ENCODE measurements at regions of chr6 and their contacts with region 1.

Region 1: GRCh38 chr6:33271458-33272274 is at the starts of genes RPS18 and VPS52:
- DNase-seq: peak; percentile 94
- H3K4me3 Mint-ChIP-seq: peak within 1 kb of the TSS; percentile 94
- H3K27ac Mint-ChIP-seq: peak within 1 kb of the TSS; percentile 98
- H3K4me1 Mint-ChIP-seq: peaks cover 42% of the 10 kb centered on the region
- H3K27me3 Mint-ChIP-seq: no peaks in the 10 kb centered on the region
- total RNA-seq, gene RPS18: 4,372 to 4,391 TPM
- total RNA-seq, gene VPS52: 32.7 to 33.7 TPM

Region 2: GRCh38 chr6:32843979-32844838 is 427.5 kb before region 1 on chr6 and contains the start of gene PSMB8:
- CTCF ChIA-PET with region 1: interaction called, 4 read pairs
- POLR2A ChIA-PET with region 1: no interaction called
- intact Hi-C with region 1: loop called (anchors 2 kb)
- DNase-seq: peak; percentile 99
- H3K4me3 Mint-ChIP-seq: peak within 1 kb of the TSS; percentile 97
- H3K27ac Mint-ChIP-seq: peak within 1 kb of the TSS; percentile 100
- H3K4me1 Mint-ChIP-seq: peaks cover 63% of the 10 kb centered on the region
- H3K27me3 Mint-ChIP-seq: no peaks in the 10 kb centered on the region
- total RNA-seq, gene PSMB8: 350 to 370 TPM

Region 3: GRCh38 chr6:33288921-33289748 is 17.5 kb after region 1 on chr6 and contains the starts of genes PFDN6 and WDR46:
- CTCF ChIA-PET with region 1: interaction called, 37 read pairs
- POLR2A ChIA-PET with region 1: interaction called, 40 read pairs
- intact Hi-C with region 1: loop called (anchors 1 kb)
- DNase-seq: peak; percentile 89
- H3K4me3 Mint-ChIP-seq: peak within 1 kb of the TSS; percentile 98
- H3K27ac Mint-ChIP-seq: peak within 1 kb of the TSS; percentile 80
- H3K4me1 Mint-ChIP-seq: peaks cover 41% of the 10 kb centered on the region
- H3K27me3 Mint-ChIP-seq: no peaks in the 10 kb centered on the region
- total RNA-seq, gene PFDN6: 78.5 to 90.9 TPM
- total RNA-seq, gene WDR46: 59.4 to 60.7 TPM

Region 4: DNA sequence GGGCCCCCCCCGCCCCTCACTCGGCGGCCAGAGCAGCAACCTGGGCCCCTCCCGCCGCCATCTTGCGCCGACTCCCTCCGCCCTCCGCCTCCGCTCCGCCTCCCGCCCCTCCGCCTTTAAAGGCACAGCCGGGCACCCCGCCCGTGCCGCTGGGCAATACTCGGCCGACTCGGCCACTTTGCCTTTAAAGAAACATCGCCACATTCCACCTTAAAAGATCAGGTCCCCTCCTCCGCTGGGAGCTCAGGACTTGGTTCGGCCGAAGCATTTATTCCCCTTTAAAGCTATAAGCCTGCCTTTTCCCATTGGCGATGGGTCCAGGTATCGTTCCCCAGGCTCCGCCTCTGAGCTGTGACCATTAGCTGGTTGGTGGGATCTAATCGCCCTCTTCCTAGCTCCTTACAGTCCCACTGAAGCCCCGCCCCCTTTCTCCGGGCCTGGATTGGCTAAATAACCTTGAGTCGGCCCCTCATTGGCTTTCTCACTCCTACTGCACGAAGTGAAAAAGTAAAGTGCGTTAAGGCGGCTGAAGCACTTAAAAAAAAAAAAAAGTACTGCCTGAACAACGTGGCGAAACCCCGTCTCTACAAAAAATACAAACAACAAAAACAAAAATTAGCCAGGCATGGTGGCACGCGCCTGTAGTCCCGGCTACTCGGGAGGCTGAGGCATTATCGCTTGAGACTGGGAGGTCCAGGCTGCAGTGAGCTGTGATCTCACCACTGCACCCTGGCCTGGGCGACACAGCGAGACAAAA is 46.2 kb after region 1 on chr6 and contains the start of gene ZBTB22:
- CTCF ChIA-PET with region 1: interaction called, 8 read pairs
- POLR2A ChIA-PET with region 1: interaction called, 14 read pairs
- intact Hi-C with region 1: loop called (anchors 1 kb)
- DNase-seq: peak; percentile 97
- H3K4me3 Mint-ChIP-seq: peak within 1 kb of the TSS; percentile 94
- H3K27ac Mint-ChIP-seq: peak within 1 kb of the TSS; percentile 95
- H3K4me1 Mint-ChIP-seq: peaks cover 71% of the 10 kb centered on the region
- H3K27me3 Mint-ChIP-seq: no peaks in the 10 kb centered on the region
- total RNA-seq, gene ZBTB22: 11.0 to 12.1 TPM

Region 5: GRCh38 chr6:33344701-33345697 is 73.3 kb after region 1 on chr6:
- CTCF ChIA-PET with region 1: interaction called, 17 read pairs
- POLR2A ChIA-PET with region 1: interaction called, 4 read pairs
- intact Hi-C with region 1: loop called (anchors 1 kb)
- DNase-seq: peak; percentile 75
- H3K4me3 Mint-ChIP-seq: peak overlapping the region; percentile 73
- H3K27ac Mint-ChIP-seq: peak overlapping the region; percentile 85
- H3K4me1 Mint-ChIP-seq: peaks cover 24% of the 10 kb centered on the region
- H3K27me3 Mint-ChIP-seq: no peaks in the 10 kb centered on the region

Region 6: GRCh38 chr6:33481189-33481588 is 209.5 kb after region 1 on chr6:
- CTCF ChIA-PET with region 1: no interaction called
- POLR2A ChIA-PET with region 1: no interaction called
- intact Hi-C with region 1: no loop called
- DNase-seq: no peak
- H3K4me3 Mint-ChIP-seq: no peak overlapping the region
- H3K27ac Mint-ChIP-seq: no peak overlapping the region
- H3K4me1 Mint-ChIP-seq: no peaks in the 10 kb centered on the region
- H3K27me3 Mint-ChIP-seq: no peaks in the 10 kb centered on the region

Region 7: GRCh38 chr6:33579828-33580714 is 308.4 kb after region 1 on chr6 and contains the start of gene BAK1:
- CTCF ChIA-PET with region 1: no interaction called
- POLR2A ChIA-PET with region 1: interaction called, 3 read pairs
- intact Hi-C with region 1: loop called (anchors 10 kb)
- DNase-seq: peak; percentile 93
- H3K4me3 Mint-ChIP-seq: peak within 1 kb of the TSS; percentile 96
- H3K27ac Mint-ChIP-seq: peak within 1 kb of the TSS; percentile 98
- H3K4me1 Mint-ChIP-seq: peaks cover 33% of the 10 kb centered on the region
- H3K27me3 Mint-ChIP-seq: no peaks in the 10 kb centered on the region
- total RNA-seq, gene BAK1: 56.3 to 57.7 TPM

Region 8: GRCh38 chr6:33700391-33701050 is 428.9 kb after region 1 on chr6:
- CTCF ChIA-PET with region 1: no interaction called
- POLR2A ChIA-PET with region 1: no interaction called
- intact Hi-C with region 1: no loop called
- DNase-seq: peak; percentile 84
- H3K4me3 Mint-ChIP-seq: no peak overlapping the region
- H3K27ac Mint-ChIP-seq: peak overlapping the region; percentile 73
- H3K4me1 Mint-ChIP-seq: peaks cover 37% of the 10 kb centered on the region
- H3K27me3 Mint-ChIP-seq: no peaks in the 10 kb centered on the region

Measured in activated CD4-positive, alpha-beta memory T cell treated with anti-CD3 and anti-CD28 coated beads for 36 hours (primary cell).